ENCODE measurements at regions of chr3 and their contacts with region 1.

Region 1: DNA sequence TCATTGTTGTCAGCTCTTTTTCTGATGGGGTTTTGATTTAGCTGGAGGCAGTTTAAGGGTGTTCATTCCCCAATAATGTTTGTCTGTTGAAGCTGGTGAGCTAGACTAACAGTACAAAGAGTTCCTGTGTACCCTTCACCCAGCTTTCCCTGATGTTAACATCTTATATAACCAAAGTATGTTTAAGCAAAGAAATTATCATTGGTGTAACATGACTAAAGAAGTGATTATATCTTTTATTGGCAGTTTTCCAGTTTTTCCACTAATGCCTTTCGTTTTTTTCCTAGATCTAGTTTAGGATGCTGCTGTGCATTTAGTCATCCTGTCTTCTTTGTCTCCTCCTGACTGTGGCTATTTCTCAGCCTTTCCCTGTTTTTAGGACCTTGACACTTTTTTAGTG is 165.6 kb downstream of the LPP start:
- DNase-seq: peak; percentile 46
- H3K4me3 ChIP-seq: no peak overlapping the region
- H3K27ac ChIP-seq: no peak overlapping the region
- H3K4me1 ChIP-seq: peaks cover 48% of the 10 kb centered on the region
- H3K27me3 ChIP-seq: no peaks in the 10 kb centered on the region
- CTCF ChIP-seq: no peak

Region 2: GRCh38 chr3:188270423-188270972 is 49.1 kb before region 1 on chr3:
- CTCF ChIA-PET with region 1: no interaction called
- dilution Hi-C with region 1: no loop called
- in situ Hi-C with region 1: no loop called
- intact Hi-C with region 1: no loop called
- DNase-seq: peak; percentile 62
- H3K4me3 ChIP-seq: no peak overlapping the region
- H3K27ac ChIP-seq: peak overlapping the region; percentile 62
- H3K4me1 ChIP-seq: peaks cover 43% of the 10 kb centered on the region
- H3K27me3 ChIP-seq: no peaks in the 10 kb centered on the region
- CTCF ChIP-seq: no peak

Region 3: DNA sequence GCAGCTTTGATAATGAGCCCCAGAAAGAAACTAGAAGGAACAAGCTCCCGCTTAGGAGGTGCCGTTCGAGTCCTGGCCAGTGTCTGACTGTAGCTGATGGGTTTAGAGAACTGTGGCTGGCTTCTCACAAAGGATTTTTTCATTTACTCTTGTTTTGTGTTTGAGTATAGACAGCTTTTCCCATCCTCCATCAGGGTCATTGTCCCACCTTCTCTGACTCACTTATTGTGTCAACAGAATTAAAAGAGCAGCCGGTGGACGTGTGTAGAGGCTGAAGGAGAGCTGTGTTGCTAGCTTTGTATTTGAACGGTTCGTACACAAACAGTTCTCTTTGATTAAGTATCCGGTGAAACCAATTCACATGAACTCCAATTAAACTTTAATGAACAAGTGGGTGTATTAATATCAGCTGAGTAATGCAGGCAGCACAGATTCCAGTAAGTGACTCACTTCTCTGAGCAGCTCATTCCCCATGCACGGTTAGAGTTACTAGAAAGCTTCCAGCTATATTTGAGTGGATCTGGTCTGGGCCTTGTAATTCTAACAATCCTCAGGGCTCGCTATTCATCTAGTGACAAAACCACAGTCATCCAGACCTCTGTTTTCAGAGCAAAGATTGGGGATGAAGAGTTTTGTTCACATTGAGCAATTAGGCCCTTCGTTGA is 24.6 kb before region 1 on chr3:
- CTCF ChIA-PET with region 1: no interaction called
- dilution Hi-C with region 1: no loop called
- in situ Hi-C with region 1: no loop called
- intact Hi-C with region 1: loop called (anchors 2 kb)
- DNase-seq: peak; percentile 95
- H3K4me3 ChIP-seq: peak overlapping the region in 2 of 3 experiments; percentile 18 to 28
- H3K27ac ChIP-seq: peak overlapping the region; percentile 97
- H3K4me1 ChIP-seq: peaks cover 57% of the 10 kb centered on the region
- H3K27me3 ChIP-seq: no peaks in the 10 kb centered on the region
- CTCF ChIP-seq: no peak